SK-N-SH (cell line): ENCODE measurements at regions of chr11 and their contacts with region 1.

Region 1: GRCh38 chr11:116471608-116472256 is 301.1 kb downstream of the BUD13 start:
- DNase-seq: no peak
- H3K4me3 ChIP-seq: no peak overlapping the region
- H3K27ac ChIP-seq: peak overlapping the region in 1 of 2 experiments; percentile 94; a peak in 1 of 4 replicates
- H3K4me1 ChIP-seq: peaks cover 0 to 32% of the 10 kb centered on the region in 2 experiments; a peak in 2 of 4 replicates
- H3K27me3 ChIP-seq: no peaks in the 10 kb centered on the region
- CTCF ChIP-seq: no peak
- EP300 ChIP-seq: no peak
- RAD21 ChIP-seq: no peak

Region 2: DNA sequence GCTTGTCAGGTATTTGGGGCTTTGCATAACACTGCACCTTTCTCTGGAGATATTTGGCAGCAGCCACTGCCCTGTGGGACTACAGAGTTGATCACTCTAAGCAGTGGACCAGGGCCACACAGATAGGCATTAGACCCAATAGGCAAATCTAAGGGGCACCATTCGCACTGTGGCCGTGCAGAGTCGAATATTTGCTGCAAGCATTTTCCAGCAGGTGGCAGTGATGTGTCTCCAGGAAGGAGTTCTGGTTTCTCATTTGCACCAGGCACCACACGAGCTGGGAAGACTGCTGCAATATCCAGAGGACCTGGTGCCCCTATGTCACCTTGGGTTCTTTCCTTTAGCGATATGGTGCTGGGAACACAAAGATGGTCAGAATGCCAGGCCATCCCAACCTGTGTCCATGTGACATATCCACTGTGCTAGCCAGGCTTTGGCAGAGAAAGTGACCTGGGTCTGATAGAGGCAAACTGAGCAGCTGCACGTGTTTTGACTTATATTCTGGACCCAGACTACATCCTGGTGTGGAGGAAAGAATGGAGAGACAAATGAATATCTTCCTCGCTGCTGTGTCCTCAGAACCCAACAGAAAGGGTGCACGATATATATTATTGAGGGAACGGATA is 17.6 kb before region 1 on chr11:
- CTCF ChIA-PET with region 1: interaction called, 5 read pairs
- POLR2A ChIA-PET with region 1: interaction called, 10 read pairs
- DNase-seq: peak; percentile 37
- H3K4me3 ChIP-seq: no peak overlapping the region
- H3K27ac ChIP-seq: peak overlapping the region in 1 of 2 experiments; percentile 99; a peak in 2 of 4 replicates
- H3K4me1 ChIP-seq: peaks cover 0 to 46% of the 10 kb centered on the region in 2 experiments; a peak in 1 of 4 replicates
- H3K27me3 ChIP-seq: no peaks in the 10 kb centered on the region
- CTCF ChIP-seq: peak; percentile 62
- EP300 ChIP-seq: no peak
- RAD21 ChIP-seq: peak; percentile 80